IMR-90 (cell line): ENCODE measurements at regions of chr6 and their contacts with region 1.

Region 1: GRCh38 chr6:149431905-149432775 is 32.1 kb downstream of the SUMO4 start:
- DNase-seq: peak; percentile 74
- ATAC-seq: peak; percentile 98
- H3K4me3 ChIP-seq: no peak overlapping the region
- H3K27ac ChIP-seq: no peak overlapping the region
- H3K4me1 ChIP-seq: 0 out of 2 replicates have a peak, but pooled peaks cover 2% of the 10 kb centered on the region
- H3K27me3 ChIP-seq: peaks cover 2% of the 10 kb centered on the region
- CTCF ChIP-seq: peak; percentile 93
- POLR2A ChIP-seq: no peak
- RAD21 ChIP-seq: peak; percentile 99

Region 2: GRCh38 chr6:149082286-149082707 is 349.8 kb before region 1 on chr6:
- CTCF ChIA-PET with region 1: interaction called, 13 read pairs
- POLR2A ChIA-PET with region 1: no interaction called
- dilution Hi-C with region 1: no loop called
- in situ Hi-C with region 1: loop called (anchors 5 kb)
- intact Hi-C with region 1: loop called (anchors 1 kb)
- DNase-seq: peak; percentile 75
- ATAC-seq: peak; percentile 50
- H3K4me3 ChIP-seq: no peak overlapping the region
- H3K27ac ChIP-seq: no peak overlapping the region
- H3K4me1 ChIP-seq: peaks cover 13% of the 10 kb centered on the region
- H3K27me3 ChIP-seq: peaks cover 5% of the 10 kb centered on the region
- CTCF ChIP-seq: peak; percentile 79
- POLR2A ChIP-seq: no peak
- RAD21 ChIP-seq: peak; percentile 82

Region 3: GRCh38 chr6:149087891-149088290 is 344.2 kb before region 1 on chr6:
- CTCF ChIA-PET with region 1: interaction called, 13 read pairs
- POLR2A ChIA-PET with region 1: no interaction called
- dilution Hi-C with region 1: no loop called
- in situ Hi-C with region 1: loop called (anchors 5 kb)
- intact Hi-C with region 1: no loop called
- DNase-seq: no peak
- ATAC-seq: no peak
- H3K4me3 ChIP-seq: no peak overlapping the region
- H3K27ac ChIP-seq: no peak overlapping the region
- H3K4me1 ChIP-seq: no peaks in the 10 kb centered on the region
- H3K27me3 ChIP-seq: peaks cover 28% of the 10 kb centered on the region
- CTCF ChIP-seq: no peak
- POLR2A ChIP-seq: no peak
- RAD21 ChIP-seq: no peak

Region 4: DNA sequence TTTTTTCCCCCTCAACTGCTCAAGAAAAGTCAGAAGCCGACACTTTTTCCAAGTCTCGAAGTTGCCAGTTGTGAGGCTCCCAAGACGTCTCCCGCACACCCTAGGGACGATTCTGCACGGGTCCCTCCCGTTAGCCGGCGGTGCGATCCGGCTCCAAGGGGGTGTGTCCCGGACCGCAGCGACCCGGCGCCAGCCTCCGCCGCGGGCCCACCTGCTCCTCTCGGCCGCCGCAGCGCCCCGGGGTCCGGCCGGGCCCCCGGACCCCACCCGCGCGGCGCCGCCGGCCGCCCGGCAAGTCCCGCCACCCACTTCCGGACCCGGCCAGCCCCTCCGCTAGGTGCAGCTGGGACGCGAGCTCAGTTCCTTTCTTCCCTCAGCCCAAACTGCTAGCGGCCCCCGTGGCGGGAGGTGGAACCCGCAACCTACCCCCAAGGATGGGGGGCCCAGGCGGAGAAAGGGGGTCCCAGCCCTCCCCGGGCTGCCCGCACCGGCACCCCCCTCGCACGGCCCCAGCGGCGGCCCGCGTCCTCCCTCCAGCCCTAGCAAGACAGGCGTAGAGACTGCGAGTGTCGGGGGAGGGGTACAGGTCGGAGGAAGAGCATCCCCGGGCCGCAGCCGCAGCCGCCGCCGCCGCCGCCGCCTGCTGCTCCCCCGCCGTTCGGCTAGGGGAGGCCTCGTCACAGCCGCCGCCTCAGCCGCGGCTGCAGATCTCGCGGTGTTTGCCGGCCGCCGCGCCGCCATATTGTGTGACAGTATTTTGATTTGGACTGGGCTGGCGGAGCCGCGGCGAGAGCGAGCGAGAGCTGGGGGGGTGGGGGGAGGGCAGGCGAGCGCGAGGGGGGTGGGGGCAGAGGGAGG is 115.1 kb before region 1 on chr6:
- CTCF ChIA-PET with region 1: no interaction called
- POLR2A ChIA-PET with region 1: no interaction called
- dilution Hi-C with region 1: no loop called
- in situ Hi-C with region 1: no loop called
- intact Hi-C with region 1: loop called (anchors 5 kb)
- DNase-seq: peak; percentile 89
- ATAC-seq: peak; percentile 90
- H3K4me3 ChIP-seq: peak overlapping the region; percentile 99
- H3K27ac ChIP-seq: peak overlapping the region; percentile 97
- H3K4me1 ChIP-seq: peaks cover 4% of the 10 kb centered on the region
- H3K27me3 ChIP-seq: no peaks in the 10 kb centered on the region; the same call in 1 of the 2 replicates
- CTCF ChIP-seq: no peak
- POLR2A ChIP-seq: peak; percentile 63; the same call in 1 of the 2 replicates
- RAD21 ChIP-seq: 0 out of 2 replicates have a peak, but pooled peaks have one; percentile 8

Region 5: DNA sequence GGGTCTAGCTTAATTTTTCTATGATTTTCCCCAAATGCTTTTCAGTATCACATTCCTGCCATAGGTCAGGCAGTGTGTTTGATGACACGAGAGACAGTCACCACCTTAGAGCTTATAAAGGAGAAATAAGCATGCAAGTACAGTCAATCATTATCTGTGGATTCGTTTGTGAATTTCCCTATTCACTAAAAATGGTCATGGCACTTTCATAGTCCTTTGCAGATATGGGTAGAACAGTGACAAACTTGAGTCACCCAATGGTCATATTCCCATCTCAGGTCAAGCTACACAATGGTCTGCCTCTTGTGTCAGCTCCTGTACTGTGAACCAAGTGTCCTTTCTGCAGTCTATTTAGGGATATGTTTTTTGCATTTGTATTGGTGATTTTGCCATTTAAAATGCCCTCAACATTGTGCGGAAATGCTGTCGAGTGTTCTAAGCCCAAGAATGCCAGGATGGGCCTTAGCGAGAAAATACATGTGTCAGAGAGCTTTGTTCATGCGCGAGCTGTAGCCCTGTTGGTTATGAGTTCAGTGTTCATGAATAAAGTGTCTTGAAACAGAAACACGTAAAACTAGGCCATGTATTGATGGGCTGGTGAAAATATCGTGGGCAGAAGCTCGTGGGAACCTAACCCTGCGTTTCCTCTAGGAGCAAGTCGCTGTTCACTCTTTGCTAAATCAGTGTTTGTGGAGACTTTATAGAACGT is 12.3 kb before region 1 on chr6:
- CTCF ChIA-PET with region 1: interaction called, 10 read pairs
- POLR2A ChIA-PET with region 1: no interaction called
- dilution Hi-C with region 1: no loop called
- in situ Hi-C with region 1: no loop called
- intact Hi-C with region 1: no loop called
- DNase-seq: no peak
- ATAC-seq: no peak
- H3K4me3 ChIP-seq: no peak overlapping the region
- H3K27ac ChIP-seq: no peak overlapping the region
- H3K4me1 ChIP-seq: peaks cover 2% of the 10 kb centered on the region; the same call in 1 of the 2 replicates
- H3K27me3 ChIP-seq: peaks cover 4% of the 10 kb centered on the region
- CTCF ChIP-seq: no peak
- POLR2A ChIP-seq: no peak
- RAD21 ChIP-seq: no peak

Region 6: DNA sequence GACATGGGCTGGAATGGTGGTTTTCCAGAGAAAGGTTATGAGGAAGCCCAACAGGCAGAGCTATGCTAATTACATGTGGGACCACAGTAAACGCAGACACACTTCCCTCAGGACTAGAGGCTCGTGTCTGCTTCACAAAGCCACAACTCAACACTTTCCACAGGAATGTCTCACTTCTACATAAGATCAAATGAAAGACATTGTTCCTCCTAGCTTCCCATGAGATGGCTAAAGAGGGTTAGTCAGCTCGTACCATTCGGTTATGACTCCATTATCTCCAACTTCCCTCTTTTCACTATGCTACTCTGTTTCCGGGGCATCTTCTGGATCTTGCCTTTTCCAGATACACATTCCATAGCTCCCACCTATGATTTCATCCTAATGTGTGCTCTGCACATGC is 81.8 kb after region 1 on chr6:
- CTCF ChIA-PET with region 1: interaction called, 5 read pairs
- POLR2A ChIA-PET with region 1: no interaction called
- dilution Hi-C with region 1: no loop called
- in situ Hi-C with region 1: no loop called
- intact Hi-C with region 1: loop called (anchors 1 kb)
- DNase-seq: no peak
- ATAC-seq: no peak
- H3K4me3 ChIP-seq: no peak overlapping the region
- H3K27ac ChIP-seq: no peak overlapping the region
- H3K4me1 ChIP-seq: no peaks in the 10 kb centered on the region
- H3K27me3 ChIP-seq: no peaks in the 10 kb centered on the region
- CTCF ChIP-seq: no peak
- POLR2A ChIP-seq: no peak
- RAD21 ChIP-seq: no peak

Region 7: GRCh38 chr6:149614337-149614736 is 182.2 kb after region 1 on chr6:
- CTCF ChIA-PET with region 1: no interaction called
- POLR2A ChIA-PET with region 1: no interaction called
- dilution Hi-C with region 1: no loop called
- in situ Hi-C with region 1: no loop called
- intact Hi-C with region 1: no loop called
- DNase-seq: peak; percentile 41
- ATAC-seq: no peak
- H3K4me3 ChIP-seq: no peak overlapping the region
- H3K27ac ChIP-seq: no peak overlapping the region
- H3K4me1 ChIP-seq: no peaks in the 10 kb centered on the region; the same call in 1 of the 2 replicates
- H3K27me3 ChIP-seq: no peaks in the 10 kb centered on the region
- CTCF ChIP-seq: no peak
- POLR2A ChIP-seq: no peak
- RAD21 ChIP-seq: no peak